ENCODE measurements at regions of chr3 and their contacts with region 1.

Region 1: GRCh38 chr3:17412950-17413530 is 329.4 kb downstream of the TBC1D5 start:
- DNase-seq: no peak
- H3K4me3 Mint-ChIP-seq: no peak overlapping the region
- H3K27ac Mint-ChIP-seq: no peak overlapping the region
- H3K4me1 Mint-ChIP-seq: peaks cover 1% of the 10 kb centered on the region
- H3K27me3 Mint-ChIP-seq: no peaks in the 10 kb centered on the region

Region 2: DNA sequence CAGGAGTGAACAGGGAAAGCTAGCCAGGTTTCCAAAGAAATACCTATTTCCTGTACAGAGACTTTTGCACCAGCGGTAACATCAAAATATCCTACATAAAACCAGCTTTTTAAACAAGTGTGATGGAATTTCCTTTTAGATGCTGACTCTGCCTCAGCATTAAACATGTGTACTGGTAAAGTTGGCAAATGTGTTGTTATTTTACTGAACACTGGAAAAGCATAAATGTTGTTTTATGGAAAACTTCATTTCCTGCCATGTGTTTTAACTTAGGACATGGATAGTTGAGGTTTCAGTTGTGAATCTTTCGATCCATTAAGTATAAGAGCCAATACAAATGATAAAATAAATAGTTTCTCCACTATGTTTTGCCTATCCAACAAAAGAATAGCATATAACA is 1132.4 kb before region 1 on chr3:
- CTCF ChIA-PET with region 1: no interaction called
- POLR2A ChIA-PET with region 1: no interaction called
- DNase-seq: no peak
- H3K4me3 Mint-ChIP-seq: no peak overlapping the region
- H3K27ac Mint-ChIP-seq: no peak overlapping the region
- H3K4me1 Mint-ChIP-seq: peaks cover 16% of the 10 kb centered on the region
- H3K27me3 Mint-ChIP-seq: no peaks in the 10 kb centered on the region

Region 3: DNA sequence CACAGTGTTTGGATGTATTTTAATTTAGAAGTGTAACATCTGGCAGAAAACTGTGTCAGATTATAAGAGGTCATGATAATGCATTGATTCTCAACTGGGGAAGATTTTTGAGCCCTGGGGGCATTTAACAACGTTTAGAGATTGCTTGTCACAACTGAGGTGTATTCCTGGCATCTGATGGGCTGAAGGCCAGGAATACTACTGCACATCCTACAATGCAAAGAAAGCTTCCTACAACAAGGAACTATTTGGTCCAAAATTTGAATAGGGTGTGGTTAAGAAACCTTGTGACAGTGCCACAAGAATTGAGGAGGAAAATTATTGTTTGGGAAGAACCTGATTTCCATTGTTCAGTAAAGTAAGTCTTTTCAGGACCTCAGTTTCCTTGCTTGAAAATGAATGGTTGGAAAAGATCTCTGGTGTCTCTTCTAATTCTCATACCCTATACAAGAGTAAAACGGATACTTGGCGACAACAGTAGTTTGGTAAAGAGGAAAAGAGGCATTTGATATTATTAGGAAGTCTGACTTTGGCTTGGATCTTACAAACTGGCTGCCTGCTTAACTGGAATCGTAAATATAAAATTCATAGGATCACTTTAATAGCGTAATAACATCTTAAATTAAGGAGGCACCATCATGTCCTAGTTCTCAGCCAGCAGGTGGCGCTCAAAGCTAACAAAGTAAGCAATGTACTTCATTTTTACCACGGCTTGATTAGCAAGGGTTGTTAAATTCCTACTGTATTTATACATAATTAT is 812.1 kb before region 1 on chr3:
- CTCF ChIA-PET with region 1: interaction called, 14 read pairs
- POLR2A ChIA-PET with region 1: no interaction called
- DNase-seq: peak; percentile 82
- H3K4me3 Mint-ChIP-seq: no peak overlapping the region
- H3K27ac Mint-ChIP-seq: no peak overlapping the region
- H3K4me1 Mint-ChIP-seq: peaks cover 27% of the 10 kb centered on the region
- H3K27me3 Mint-ChIP-seq: peaks cover 46% of the 10 kb centered on the region

Region 4: DNA sequence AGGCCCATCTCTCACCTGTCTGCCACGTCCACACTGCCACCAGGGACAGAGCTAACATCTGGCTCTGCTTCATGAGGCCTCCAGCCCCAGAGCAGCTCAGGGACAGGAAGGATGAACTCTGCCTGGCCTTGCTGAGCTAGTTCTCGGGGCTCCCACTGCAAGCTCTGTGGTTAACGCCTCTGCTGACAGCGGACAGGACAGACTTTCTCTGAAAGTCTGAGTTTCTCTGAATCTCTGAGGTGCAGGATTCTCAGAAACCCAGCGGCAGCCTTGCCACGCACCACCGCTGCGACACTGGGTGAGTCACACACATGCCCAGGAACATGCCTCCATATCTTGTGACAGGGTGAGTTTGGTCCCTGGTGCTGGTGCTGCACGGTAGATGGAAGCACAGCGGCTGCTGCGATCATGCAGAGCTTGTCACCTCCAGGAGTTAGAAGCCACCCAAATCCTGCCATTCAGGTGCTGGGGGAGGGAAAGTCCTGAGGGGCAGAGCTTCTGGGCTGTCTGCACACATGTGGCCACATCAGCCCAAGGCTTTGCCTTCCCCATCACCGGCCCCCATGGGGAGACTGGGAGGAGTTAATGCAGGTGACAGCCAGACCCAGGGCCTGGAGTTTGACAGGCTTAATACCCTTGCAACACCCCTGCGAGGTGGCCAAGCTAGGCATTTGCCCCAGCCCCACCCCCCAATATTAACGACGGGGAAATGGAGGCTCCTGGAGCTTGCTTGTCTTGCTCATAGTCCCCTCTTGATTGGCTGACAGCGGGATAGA is 261.3 kb before region 1 on chr3:
- CTCF ChIA-PET with region 1: no interaction called
- POLR2A ChIA-PET with region 1: no interaction called
- DNase-seq: peak; percentile 95
- H3K4me3 Mint-ChIP-seq: peak overlapping the region; percentile 58
- H3K27ac Mint-ChIP-seq: peak overlapping the region; percentile 85
- H3K4me1 Mint-ChIP-seq: peaks cover 51% of the 10 kb centered on the region
- H3K27me3 Mint-ChIP-seq: no peaks in the 10 kb centered on the region

Region 5: GRCh38 chr3:17258823-17259436 is 154.1 kb before region 1 on chr3:
- CTCF ChIA-PET with region 1: interaction called, 19 read pairs
- POLR2A ChIA-PET with region 1: no interaction called
- DNase-seq: no peak
- H3K4me3 Mint-ChIP-seq: no peak overlapping the region
- H3K27ac Mint-ChIP-seq: no peak overlapping the region
- H3K4me1 Mint-ChIP-seq: no peaks in the 10 kb centered on the region
- H3K27me3 Mint-ChIP-seq: no peaks in the 10 kb centered on the region

Region 6: DNA sequence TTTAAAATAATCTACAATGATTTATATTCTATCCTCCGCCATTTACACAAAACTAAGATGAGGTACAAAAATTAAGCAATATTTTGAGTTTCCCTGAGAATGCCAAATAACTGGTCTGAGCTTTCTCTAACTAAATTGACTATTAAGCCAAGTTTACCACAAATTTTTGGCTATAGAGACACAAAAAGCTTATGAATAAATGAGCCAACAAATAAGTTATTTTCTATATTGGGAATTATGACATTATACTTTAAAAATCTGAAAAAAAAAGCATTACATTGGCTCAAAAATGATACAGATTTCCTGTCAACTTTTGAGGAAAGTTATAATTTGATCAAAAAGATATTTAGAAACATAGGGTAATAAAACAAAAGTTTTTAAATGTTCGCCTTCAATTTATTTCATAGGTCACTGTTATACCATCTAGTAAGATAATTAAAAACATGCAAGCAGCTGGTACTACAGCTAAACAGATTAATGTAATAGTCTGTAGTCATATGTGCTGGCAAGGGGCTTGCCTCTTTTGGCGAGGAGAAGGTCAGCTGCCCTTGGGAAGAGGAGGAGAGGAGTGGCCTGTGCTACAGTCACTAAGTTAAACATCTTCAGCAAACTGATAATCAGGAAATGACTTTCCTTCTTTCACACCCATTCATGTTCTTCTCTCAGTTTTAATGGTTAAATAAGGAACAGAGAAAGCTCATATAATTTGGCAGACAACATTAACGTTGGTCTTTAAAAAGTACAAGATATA is 10.9 kb after region 1 on chr3:
- CTCF ChIA-PET with region 1: interaction called, 16 read pairs
- POLR2A ChIA-PET with region 1: no interaction called
- DNase-seq: no peak
- H3K4me3 Mint-ChIP-seq: no peak overlapping the region
- H3K27ac Mint-ChIP-seq: no peak overlapping the region
- H3K4me1 Mint-ChIP-seq: no peaks in the 10 kb centered on the region
- H3K27me3 Mint-ChIP-seq: no peaks in the 10 kb centered on the region